ENCODE measurements at regions of chr19 and their contacts with region 1.

Region 1: DNA sequence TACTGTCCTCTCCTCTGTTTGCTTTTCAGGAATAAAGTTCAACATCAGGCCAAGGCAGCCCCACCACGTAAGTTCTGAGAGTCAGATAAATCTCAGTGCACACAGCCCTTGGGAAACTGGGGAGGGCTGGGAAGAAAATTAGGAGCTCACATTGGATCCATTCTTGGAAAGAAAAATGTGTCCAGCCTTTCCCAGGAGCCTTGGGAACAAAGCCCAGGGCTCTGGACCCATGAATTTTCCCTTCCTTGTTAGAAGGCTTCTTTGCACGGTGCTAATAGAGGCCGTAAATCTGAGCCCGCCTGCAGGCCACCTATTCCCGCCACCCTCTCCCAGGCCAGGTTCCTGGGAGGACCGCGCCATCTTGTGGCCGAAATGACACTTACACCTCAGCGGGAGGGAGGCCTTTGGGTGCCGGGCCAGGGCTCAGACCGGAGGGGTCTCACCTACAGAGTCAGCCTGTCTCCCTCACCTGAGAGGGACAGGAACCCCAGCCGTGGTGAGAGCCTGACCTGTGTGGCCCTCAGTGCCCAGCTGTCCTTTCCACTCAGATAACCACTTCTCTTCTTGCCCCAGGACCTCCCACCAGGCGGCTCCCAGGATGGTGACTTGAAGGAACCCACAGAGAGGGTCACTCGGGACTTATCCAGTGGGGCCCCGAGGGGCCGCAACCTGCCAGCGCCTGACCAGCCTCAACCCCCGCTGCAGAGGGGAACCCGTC is 25.1 kb upstream of the KCTD15 start:
- DNase-seq: peak; percentile 50
- ATAC-seq: peak; percentile 89
- H3K4me3 ChIP-seq: no peak overlapping the region
- H3K27ac ChIP-seq: no peak overlapping the region
- H3K4me1 ChIP-seq: no peaks in the 10 kb centered on the region
- H3K27me3 ChIP-seq: peaks cover 1 to 5% of the 10 kb centered on the region in 2 experiments; a peak in 2 of 5 replicates
- CTCF ChIP-seq: peak; percentile 96
- EP300 ChIP-seq: no peak
- POLR2A ChIP-seq: no peak
- RAD21 ChIP-seq: peak; percentile 92

Region 2: DNA sequence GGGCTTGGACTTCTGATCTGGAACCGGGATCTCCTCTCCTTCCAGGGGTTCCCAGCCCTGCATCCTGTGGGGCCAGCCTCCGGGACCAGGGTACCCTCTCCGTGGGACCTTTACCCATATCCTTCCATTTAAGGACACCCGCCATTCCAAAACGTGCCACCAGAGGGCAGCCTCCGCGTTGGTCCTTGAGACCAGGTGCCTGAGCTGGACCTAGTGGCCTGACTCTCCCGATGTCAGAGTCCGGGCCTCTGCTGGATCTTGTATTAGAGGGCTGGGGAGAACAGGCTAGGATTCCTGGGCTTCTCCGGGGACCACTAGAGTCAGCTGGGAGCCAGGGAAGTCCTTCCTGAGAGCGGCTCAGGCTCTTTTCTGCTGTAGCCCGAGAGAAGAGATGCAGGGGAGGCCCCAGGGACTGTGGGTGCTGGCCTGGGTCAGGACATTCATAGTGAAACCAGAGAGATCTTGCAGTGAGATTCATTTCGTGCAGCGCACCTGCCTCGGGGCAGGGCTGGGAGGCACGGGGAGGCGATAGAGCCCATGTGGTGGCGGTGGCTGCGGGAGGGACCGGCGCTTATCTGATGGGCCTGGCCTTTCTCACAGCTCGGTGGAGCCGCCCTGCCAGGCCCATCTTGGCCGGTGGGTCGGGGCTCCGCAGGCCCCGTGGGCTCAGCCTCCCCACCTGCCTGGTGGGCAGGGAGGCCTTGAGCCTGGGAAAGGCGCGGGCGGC is 536.1 kb before region 1 on chr19:
- CTCF ChIA-PET with region 1: interaction called, 3 read pairs
- POLR2A ChIA-PET with region 1: no interaction called
- in situ Hi-C with region 1: loop called (anchors 5 kb)
- intact Hi-C with region 1: loop called (anchors 5 kb)
- DNase-seq: peak; percentile 78
- ATAC-seq: peak; percentile 86
- H3K4me3 ChIP-seq: peak overlapping the region in 2 of 3 experiments; percentile 37 to 53; a peak in 3 of 6 replicates
- H3K27ac ChIP-seq: no peak overlapping the region
- H3K4me1 ChIP-seq: peaks cover 44% of the 10 kb centered on the region
- H3K27me3 ChIP-seq: peaks cover 0 to 6% of the 10 kb centered on the region in 2 experiments; a peak in 1 of 5 replicates
- CTCF ChIP-seq: peak; percentile 95
- EP300 ChIP-seq: no peak
- POLR2A ChIP-seq: no peak
- RAD21 ChIP-seq: peak; percentile 89

Region 3: DNA sequence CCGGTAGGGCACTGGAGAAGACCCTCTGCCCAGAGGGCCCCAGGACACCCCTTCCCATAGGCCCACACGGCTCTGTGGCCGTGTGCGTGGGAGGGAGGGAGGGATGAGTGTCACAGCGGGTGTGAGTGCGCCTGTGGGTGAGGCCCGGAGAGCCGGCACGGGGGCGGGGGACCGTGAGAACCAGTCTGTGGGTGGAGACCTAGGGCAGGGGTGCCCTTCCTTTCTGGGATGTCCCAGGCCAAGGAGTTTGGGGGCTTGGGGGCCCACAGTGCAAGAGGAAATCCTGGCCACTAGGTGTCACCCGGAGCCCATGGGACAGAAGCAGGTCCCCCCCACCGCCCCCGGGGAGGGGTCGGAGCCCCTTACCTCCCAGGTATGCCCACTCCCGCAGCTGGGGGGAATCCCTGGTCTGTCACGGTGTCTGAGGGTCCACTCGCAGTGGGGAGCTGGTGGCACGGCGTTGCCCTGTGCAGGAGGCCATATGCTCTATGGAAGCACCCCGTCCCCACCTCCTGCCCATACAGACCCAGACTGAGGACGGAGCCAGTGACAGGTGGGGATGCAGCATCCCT is 529.9 kb before region 1 on chr19:
- CTCF ChIA-PET with region 1: no interaction called
- POLR2A ChIA-PET with region 1: no interaction called
- in situ Hi-C with region 1: loop called (anchors 5 kb)
- intact Hi-C with region 1: loop called (anchors 5 kb)
- DNase-seq: no peak
- ATAC-seq: peak; percentile 69
- H3K4me3 ChIP-seq: peak overlapping the region in 2 of 3 experiments; percentile 39 to 67; a peak in 5 of 6 replicates
- H3K27ac ChIP-seq: peak overlapping the region; percentile 49
- H3K4me1 ChIP-seq: peaks cover 46% of the 10 kb centered on the region
- H3K27me3 ChIP-seq: no peaks in the 10 kb centered on the region
- CTCF ChIP-seq: peak; percentile 98
- EP300 ChIP-seq: no peak
- POLR2A ChIP-seq: no peak
- RAD21 ChIP-seq: peak; percentile 98

Region 4: DNA sequence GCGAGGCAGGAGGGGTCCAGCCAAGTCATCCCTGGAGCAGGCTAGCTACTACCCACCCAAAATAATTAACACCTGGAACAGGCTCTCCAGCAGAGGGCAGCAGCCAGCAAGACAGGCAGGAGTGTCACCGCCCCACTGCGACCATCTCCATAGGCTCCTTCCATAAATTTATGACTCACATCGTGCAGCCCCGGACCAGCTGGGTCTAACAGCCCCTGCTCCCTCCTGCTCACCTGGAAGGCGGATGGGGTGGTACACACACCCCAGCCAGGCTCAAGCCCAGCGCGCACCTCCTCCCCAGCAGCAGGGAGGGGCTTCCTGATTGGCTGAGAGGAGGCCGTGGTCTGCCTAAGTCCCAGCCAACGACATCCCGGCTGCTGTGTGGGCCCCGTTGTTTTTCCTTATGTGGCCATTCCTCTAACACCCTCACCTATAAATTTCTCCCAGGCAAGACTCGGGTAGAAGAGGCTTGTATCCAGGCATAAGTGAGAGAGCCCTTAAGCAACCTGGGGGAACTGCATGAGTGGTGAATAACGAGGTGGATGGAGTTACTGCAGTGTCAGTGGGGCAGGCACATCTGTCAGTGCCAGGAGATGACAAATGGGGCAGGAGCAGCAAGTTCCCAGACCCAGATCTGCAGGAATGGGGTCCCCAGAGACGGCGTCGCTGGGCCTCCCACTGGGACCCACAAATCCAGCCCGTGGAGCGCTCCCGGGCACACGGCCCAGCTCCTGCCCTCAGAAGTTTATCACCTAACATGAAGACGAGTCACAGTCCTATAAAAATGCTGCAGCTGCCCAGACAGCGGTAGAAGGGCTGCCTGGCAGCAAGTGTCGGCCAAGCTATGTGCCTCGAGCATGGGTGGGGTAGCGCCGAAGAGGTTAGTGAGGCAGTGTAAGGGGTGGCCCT is 355.0 kb before region 1 on chr19:
- CTCF ChIA-PET with region 1: interaction called, 11 read pairs
- POLR2A ChIA-PET with region 1: no interaction called
- in situ Hi-C with region 1: no loop called
- intact Hi-C with region 1: no loop called
- DNase-seq: peak; percentile 44
- ATAC-seq: peak; percentile 75
- H3K4me3 ChIP-seq: no peak overlapping the region
- H3K27ac ChIP-seq: no peak overlapping the region
- H3K4me1 ChIP-seq: peaks cover 8% of the 10 kb centered on the region
- H3K27me3 ChIP-seq: no peaks in the 10 kb centered on the region
- CTCF ChIP-seq: peak; percentile 77
- EP300 ChIP-seq: no peak
- POLR2A ChIP-seq: no peak
- RAD21 ChIP-seq: peak; percentile 57

Region 5: GRCh38 chr19:33430674-33431277 is 340.8 kb before region 1 on chr19:
- CTCF ChIA-PET with region 1: interaction called, 21 read pairs
- POLR2A ChIA-PET with region 1: no interaction called
- in situ Hi-C with region 1: loop called (anchors 5 kb)
- intact Hi-C with region 1: loop called (anchors 1 kb)
- DNase-seq: peak; percentile 25
- ATAC-seq: peak; percentile 93
- H3K4me3 ChIP-seq: no peak overlapping the region
- H3K27ac ChIP-seq: no peak overlapping the region
- H3K4me1 ChIP-seq: no peaks in the 10 kb centered on the region
- H3K27me3 ChIP-seq: no peaks in the 10 kb centered on the region
- CTCF ChIP-seq: peak; percentile 90
- EP300 ChIP-seq: no peak
- POLR2A ChIP-seq: no peak
- RAD21 ChIP-seq: peak; percentile 74; the same call in 1 of the 2 replicates

Region 6: GRCh38 chr19:33720691-33721682 is 50.6 kb before region 1 on chr19:
- CTCF ChIA-PET with region 1: no interaction called
- POLR2A ChIA-PET with region 1: no interaction called
- in situ Hi-C with region 1: loop called (anchors 5 kb)
- intact Hi-C with region 1: no loop called
- DNase-seq: peak; percentile 10
- ATAC-seq: peak; percentile 51
- H3K4me3 ChIP-seq: no peak overlapping the region
- H3K27ac ChIP-seq: no peak overlapping the region
- H3K4me1 ChIP-seq: no peaks in the 10 kb centered on the region
- H3K27me3 ChIP-seq: peaks cover 0 to 1% of the 10 kb centered on the region in 2 experiments; a peak in 1 of 5 replicates
- CTCF ChIP-seq: peak; percentile 50
- EP300 ChIP-seq: no peak
- POLR2A ChIP-seq: no peak
- RAD21 ChIP-seq: no peak

Region 7: GRCh38 chr19:33740811-33741396 is 30.6 kb before region 1 on chr19:
- CTCF ChIA-PET with region 1: no interaction called
- POLR2A ChIA-PET with region 1: no interaction called
- in situ Hi-C with region 1: no loop called
- intact Hi-C with region 1: no loop called
- DNase-seq: peak; percentile 31
- ATAC-seq: peak; percentile 56; the same call in 2 of the 3 replicates
- H3K4me3 ChIP-seq: no peak overlapping the region
- H3K27ac ChIP-seq: no peak overlapping the region
- H3K4me1 ChIP-seq: no peaks in the 10 kb centered on the region
- H3K27me3 ChIP-seq: no peaks in the 10 kb centered on the region; a peak in 2 of 5 replicates
- CTCF ChIP-seq: no peak
- EP300 ChIP-seq: no peak
- POLR2A ChIP-seq: no peak
- RAD21 ChIP-seq: no peak